Activated CD8-positive, alpha-beta T cell treated with anti-CD3 and anti-CD28 coated beads for 36 hours (primary cell): ENCODE measurements at regions of chr11 and their contacts with region 1.

Region 1: DNA sequence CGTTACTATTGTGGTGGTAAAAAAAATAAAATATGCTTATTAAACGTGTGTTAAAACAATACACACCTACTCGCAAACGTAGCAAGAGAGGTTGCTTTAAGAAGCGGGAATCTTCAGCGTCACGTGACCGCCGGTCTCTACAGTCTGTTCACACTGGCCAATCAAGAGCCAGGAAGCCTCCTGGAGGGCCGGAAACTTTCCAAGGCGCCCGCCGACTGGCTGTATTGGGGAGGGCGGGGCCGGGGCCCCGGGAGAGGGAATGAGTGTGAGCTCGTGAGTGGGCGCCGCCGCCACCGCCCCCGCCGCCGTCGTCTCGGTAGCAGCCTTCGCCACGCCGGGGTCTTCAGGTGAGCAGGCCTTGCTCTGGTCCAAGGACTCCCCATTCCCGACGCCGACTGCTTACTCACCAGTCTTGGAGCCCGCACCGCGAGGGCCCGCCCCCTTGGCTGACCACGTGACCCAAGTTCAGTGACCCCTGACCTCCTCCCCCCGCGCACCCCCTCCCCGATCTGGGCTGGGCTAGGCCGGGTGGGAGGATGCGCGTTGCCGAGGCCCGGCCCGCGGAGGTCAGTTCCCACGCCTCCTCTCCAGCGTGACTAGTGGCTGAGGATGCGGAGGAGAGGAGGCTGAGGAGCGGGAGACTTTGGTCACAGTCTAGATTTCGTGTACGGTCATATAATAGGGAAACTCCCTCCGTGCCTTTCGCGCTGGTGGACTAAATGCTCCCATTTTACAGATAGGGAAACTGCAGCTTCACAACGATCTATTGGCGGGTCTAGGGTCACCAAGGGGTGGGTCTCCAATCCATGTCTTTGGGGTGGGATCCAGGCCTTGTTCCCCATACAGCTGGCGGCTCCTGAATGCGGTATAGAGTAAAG is at the start of gene TAF6L:
- DNase-seq: peak; percentile 97
- ATAC-seq: peak; percentile 88
- H3K4me3 Mint-ChIP-seq: peak within 1 kb of the TSS; percentile 81
- H3K27ac Mint-ChIP-seq: peak within 1 kb of the TSS; percentile 93
- H3K4me1 Mint-ChIP-seq: peaks cover 21% of the 10 kb centered on the region
- H3K27me3 Mint-ChIP-seq: no peaks in the 10 kb centered on the region
- CTCF ChIP-seq: no peak
- total RNA-seq, gene TAF6L: 13.7 to 16.7 TPM

Region 2: GRCh38 chr11:62394825-62395538 is 376.4 kb before region 1 on chr11:
- CTCF ChIA-PET with region 1: no interaction called
- POLR2A ChIA-PET with region 1: no interaction called
- intact Hi-C with region 1: no loop called
- DNase-seq: peak; percentile 54
- ATAC-seq: peak; percentile 79
- H3K4me3 Mint-ChIP-seq: no peak overlapping the region
- H3K27ac Mint-ChIP-seq: no peak overlapping the region
- H3K4me1 Mint-ChIP-seq: peaks cover 23% of the 10 kb centered on the region
- H3K27me3 Mint-ChIP-seq: no peaks in the 10 kb centered on the region
- CTCF ChIP-seq: peak; percentile 76

Region 3: DNA sequence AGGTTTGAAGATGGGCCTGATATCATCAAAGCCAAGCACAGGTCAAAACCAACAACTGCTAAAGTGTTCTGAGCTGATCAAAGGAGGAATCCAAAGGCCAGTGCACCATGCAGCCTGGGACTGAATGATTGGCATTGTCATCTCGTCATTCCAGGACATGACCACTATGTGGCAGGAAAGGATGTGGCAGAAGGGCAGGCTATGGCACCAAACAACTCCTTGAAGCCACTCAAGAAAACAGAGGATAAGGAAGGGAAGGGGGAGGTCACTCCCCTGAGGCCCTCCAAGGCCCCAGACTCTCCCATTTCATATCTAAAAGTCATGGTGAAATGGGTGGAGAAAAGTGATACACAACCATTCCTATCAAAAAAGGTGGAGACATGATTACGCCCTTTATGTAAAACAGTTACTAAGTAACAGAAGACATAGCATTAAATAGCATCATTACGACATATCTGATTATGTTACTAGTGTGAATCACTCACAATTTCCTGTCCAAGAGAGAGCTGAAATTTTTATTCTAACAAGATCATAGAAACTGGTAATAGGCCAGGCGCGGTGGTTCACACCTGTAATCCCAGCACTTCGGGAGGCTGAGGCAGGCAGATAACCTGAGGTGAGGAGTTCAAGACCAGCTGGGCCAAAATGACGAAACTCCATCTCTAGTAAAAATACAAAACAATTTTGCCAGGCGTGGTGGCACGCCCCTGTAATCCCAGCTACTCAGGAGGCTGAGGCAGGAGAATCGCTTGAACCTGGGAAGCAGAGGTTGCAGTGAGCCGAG is 274.1 kb before region 1 on chr11:
- CTCF ChIA-PET with region 1: no interaction called
- POLR2A ChIA-PET with region 1: no interaction called
- intact Hi-C with region 1: no loop called
- DNase-seq: peak; percentile 33
- ATAC-seq: peak; percentile 79
- H3K4me3 Mint-ChIP-seq: no peak overlapping the region
- H3K27ac Mint-ChIP-seq: no peak overlapping the region
- H3K4me1 Mint-ChIP-seq: no peaks in the 10 kb centered on the region
- H3K27me3 Mint-ChIP-seq: peaks cover 8% of the 10 kb centered on the region
- CTCF ChIP-seq: peak; percentile 23

Region 4: DNA sequence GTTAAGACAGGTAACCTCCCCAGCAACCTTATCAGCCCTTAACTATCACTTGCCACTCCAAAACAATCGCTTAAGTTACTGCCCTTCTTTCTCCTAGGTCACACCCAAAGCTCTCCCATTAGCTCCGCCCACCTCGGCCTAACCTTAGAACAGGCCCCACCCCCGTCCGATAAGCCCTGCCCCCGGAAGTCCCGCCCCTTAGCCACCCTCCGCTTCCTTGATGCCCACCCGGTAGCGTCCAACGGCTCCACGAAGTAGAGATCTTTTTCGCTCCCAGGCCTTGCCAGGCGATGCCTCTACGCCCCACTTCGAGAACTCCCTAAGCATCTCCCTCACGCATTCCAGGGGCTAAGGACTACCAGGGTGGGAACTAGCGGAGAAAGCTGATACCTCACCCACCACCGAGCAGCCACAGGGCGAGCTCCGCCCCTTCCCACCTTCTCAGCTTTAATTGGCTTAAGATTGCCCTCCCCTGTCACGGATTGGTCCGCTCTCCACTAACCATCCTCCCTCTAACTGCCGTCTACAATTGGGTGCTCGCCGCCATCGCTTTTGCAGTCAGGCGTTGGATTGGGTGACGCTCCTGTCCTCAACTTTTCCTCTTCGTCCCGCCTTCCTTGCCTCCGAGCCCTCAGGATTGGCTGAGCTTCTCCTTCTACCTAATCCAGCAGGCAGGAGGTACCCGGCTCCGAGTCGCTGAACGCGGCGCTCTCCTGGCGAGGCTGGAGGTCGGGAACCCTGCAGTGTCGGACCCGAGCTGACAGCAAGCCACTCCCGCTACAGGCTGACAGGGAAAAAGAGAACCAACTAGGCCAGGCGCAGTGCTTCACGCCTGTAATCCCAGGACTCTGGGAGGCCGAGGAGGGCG is 17.4 kb before region 1 on chr11 and contains the start of gene ZBTB3:
- CTCF ChIA-PET with region 1: interaction called, 8 read pairs
- POLR2A ChIA-PET with region 1: interaction called, 23 read pairs
- intact Hi-C with region 1: no loop called
- DNase-seq: peak; percentile 99
- ATAC-seq: peak; percentile 97
- H3K4me3 Mint-ChIP-seq: peak within 1 kb of the TSS; percentile 99
- H3K27ac Mint-ChIP-seq: peak within 1 kb of the TSS; percentile 99
- H3K4me1 Mint-ChIP-seq: peaks cover 26% of the 10 kb centered on the region
- H3K27me3 Mint-ChIP-seq: no peaks in the 10 kb centered on the region
- CTCF ChIP-seq: no peak
- total RNA-seq, gene ZBTB3: 9.8 to 11.8 TPM